SK-N-SH (cell line): ENCODE measurements at regions of chr1 and their contacts with region 1.

Region 1: GRCh38 chr1:156129706-156130581 is 15.4 kb downstream of the LMNA start:
- DNase-seq: peak; percentile 90
- H3K4me3 ChIP-seq: peak overlapping the region in 1 of 2 experiments; percentile 30; a peak in 1 of 4 replicates
- H3K27ac ChIP-seq: peak overlapping the region; percentile 94 to 100
- H3K4me1 ChIP-seq: peaks cover 46 to 49% of the 10 kb centered on the region in 2 experiments
- H3K27me3 ChIP-seq: no peaks in the 10 kb centered on the region
- CTCF ChIP-seq: peak; percentile 96
- EP300 ChIP-seq: peak in 1 of 2 experiments; percentile 19; a peak in 1 of 4 replicates
- RAD21 ChIP-seq: peak; percentile 96

Region 2: GRCh38 chr1:155931332-155932038 is 198.5 kb before region 1 on chr1:
- CTCF ChIA-PET with region 1: no interaction called
- POLR2A ChIA-PET with region 1: no interaction called
- DNase-seq: no peak
- H3K4me3 ChIP-seq: peak overlapping the region; percentile 17 to 86
- H3K27ac ChIP-seq: peak overlapping the region in 1 of 2 experiments; percentile 30; a peak in 1 of 4 replicates
- H3K4me1 ChIP-seq: peaks cover 19 to 20% of the 10 kb centered on the region in 2 experiments
- H3K27me3 ChIP-seq: no peaks in the 10 kb centered on the region
- CTCF ChIP-seq: no peak
- EP300 ChIP-seq: no peak
- RAD21 ChIP-seq: no peak

Region 3: GRCh38 chr1:155978325-155978972 is 151.5 kb before region 1 on chr1 and contains the start of gene ARHGEF2:
- CTCF ChIA-PET with region 1: no interaction called
- POLR2A ChIA-PET with region 1: no interaction called
- DNase-seq: peak; percentile 91
- H3K4me3 ChIP-seq: peak within 1 kb of the TSS; percentile 88 to 91
- H3K27ac ChIP-seq: peak within 1 kb of the TSS; percentile 87 to 93
- H3K4me1 ChIP-seq: peaks cover 42 to 57% of the 10 kb centered on the region in 2 experiments
- H3K27me3 ChIP-seq: no peaks in the 10 kb centered on the region
- CTCF ChIP-seq: peak; percentile 52
- EP300 ChIP-seq: no peak
- RAD21 ChIP-seq: 0 out of 2 replicates have a peak, but pooled peaks have one; percentile 7
- polyA plus RNA-seq, gene ARHGEF2: 32.4 and 50.8 TPM in 2 replicates

Region 4: GRCh38 chr1:156067262-156067661 is 62.7 kb before region 1 on chr1:
- CTCF ChIA-PET with region 1: interaction called, 10 read pairs
- POLR2A ChIA-PET with region 1: no interaction called
- DNase-seq: no peak
- H3K4me3 ChIP-seq: no peak overlapping the region
- H3K27ac ChIP-seq: no peak overlapping the region
- H3K4me1 ChIP-seq: peaks cover 0 to 17% of the 10 kb centered on the region in 2 experiments; a peak in 1 of 4 replicates
- H3K27me3 ChIP-seq: no peaks in the 10 kb centered on the region
- CTCF ChIP-seq: no peak
- EP300 ChIP-seq: no peak
- RAD21 ChIP-seq: no peak

Region 5: DNA sequence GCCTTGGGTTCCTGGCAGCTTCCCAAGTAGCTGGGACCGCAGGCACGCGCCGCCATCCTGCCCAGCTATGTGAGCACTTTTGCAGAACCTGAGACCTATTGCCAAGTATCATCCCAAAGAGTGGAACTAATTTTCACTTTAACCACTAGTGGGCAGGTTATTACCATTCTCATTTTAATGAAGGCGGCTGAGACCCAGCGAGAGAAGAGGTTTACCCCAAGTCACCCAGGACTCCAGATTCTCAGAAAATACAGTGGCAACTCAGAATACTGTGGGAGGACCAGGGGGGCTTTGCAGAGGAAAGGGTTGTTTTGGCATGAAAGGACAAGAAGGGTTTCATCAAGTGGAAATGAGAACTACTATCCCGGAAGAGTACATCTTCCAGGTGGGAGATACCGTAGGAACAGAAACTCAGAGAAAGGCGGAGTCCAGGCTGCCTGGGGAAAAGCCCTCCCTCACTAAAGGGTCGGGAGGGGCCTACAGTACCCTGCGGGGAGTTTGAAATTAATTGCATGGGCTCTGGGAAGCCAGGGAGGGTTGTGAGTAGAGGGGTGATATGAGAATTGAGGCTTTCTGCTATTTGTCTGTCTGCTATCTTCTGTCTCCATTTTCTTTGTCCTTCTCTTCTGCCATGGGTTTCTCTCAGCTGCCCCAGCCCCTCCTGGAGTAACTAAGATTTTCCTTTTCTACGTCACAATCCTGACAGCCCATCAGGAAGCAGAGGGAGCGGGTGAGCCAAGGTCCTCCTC is 16.2 kb after region 1 on chr1:
- CTCF ChIA-PET with region 1: interaction called, 64 read pairs
- POLR2A ChIA-PET with region 1: no interaction called
- DNase-seq: peak; percentile 85
- H3K4me3 ChIP-seq: 0 out of 4 replicates have a peak overlapping the region, but pooled peaks of 1 of the 2 experiments have one; percentile 1
- H3K27ac ChIP-seq: peak overlapping the region; percentile 30 to 51; a peak in 2 of 4 replicates
- H3K4me1 ChIP-seq: peaks cover 12 to 15% of the 10 kb centered on the region in 2 experiments
- H3K27me3 ChIP-seq: no peaks in the 10 kb centered on the region
- CTCF ChIP-seq: peak; percentile 75
- EP300 ChIP-seq: no peak; a peak in 1 of 4 replicates
- RAD21 ChIP-seq: peak; percentile 87

Region 6: DNA sequence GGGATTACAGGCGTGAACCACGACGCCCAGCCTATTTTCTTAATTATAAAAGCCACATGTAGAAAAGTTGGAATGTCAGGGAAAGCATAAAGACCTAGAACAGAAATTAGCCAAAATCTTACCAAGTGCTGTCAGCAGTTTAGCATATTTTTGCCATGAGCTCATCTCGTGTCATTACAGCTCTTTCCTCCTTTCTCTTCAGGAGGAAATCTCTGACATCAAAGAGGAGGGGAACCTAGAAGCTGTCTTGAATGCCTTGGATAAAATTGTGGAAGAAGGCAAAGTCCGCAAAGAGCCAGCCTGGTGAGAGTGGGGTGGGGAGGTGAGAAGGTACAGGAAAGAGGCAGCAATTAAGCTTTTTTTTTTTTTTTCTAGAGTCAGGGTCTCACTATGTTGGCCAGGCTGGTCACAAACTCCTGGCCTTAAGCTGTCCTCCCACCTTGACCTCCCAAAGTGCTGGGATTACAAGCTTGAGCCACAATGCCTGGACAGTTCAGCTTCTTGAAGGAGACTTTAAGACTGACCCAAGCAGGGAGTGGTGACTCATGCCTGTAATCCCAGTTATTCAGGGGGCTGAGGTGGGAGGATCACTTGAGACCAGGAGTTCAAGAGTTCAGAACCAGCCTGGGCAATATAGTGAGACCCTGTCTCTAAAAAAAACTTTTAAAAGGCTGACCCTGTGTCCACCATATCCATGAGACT is 103.6 kb after region 1 on chr1:
- CTCF ChIA-PET with region 1: interaction called, 121 read pairs
- POLR2A ChIA-PET with region 1: no interaction called
- DNase-seq: no peak
- H3K4me3 ChIP-seq: no peak overlapping the region
- H3K27ac ChIP-seq: peak overlapping the region in 1 of 2 experiments; percentile 82; a peak in 2 of 4 replicates
- H3K4me1 ChIP-seq: peaks cover 0 to 11% of the 10 kb centered on the region in 2 experiments; a peak in 3 of 4 replicates
- H3K27me3 ChIP-seq: no peaks in the 10 kb centered on the region
- CTCF ChIP-seq: no peak
- EP300 ChIP-seq: no peak
- RAD21 ChIP-seq: no peak

Region 7: DNA sequence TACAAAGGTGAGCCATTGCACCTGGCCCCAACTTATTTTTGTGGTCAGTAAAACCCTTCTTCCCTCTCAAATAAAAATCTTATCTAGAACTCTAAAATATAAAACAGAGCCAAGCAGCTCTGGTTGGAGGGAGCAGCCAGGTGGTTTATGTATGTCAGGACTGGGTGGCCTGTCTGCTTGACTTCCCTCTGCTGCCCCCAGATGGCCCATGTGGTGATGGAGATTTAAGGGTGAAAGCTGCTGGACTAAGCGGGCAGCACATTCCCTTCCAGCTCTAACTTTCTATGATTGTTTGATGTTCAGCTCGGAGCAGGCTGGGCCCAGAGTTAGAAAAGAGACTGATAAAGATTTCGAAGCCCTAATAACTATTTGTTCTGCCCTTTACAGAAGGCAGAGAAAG is 129.9 kb after region 1 on chr1:
- CTCF ChIA-PET with region 1: interaction called, 11 read pairs
- POLR2A ChIA-PET with region 1: interaction called, 4 read pairs
- DNase-seq: peak; percentile 64
- H3K4me3 ChIP-seq: no peak overlapping the region
- H3K27ac ChIP-seq: peak overlapping the region in 1 of 2 experiments; percentile 36; a peak in 2 of 4 replicates
- H3K4me1 ChIP-seq: peaks cover 11 to 27% of the 10 kb centered on the region in 2 experiments; a peak in 3 of 4 replicates
- H3K27me3 ChIP-seq: no peaks in the 10 kb centered on the region
- CTCF ChIP-seq: peak; percentile 32; the same call in 1 of the 2 replicates
- EP300 ChIP-seq: peak in 1 of 2 experiments; percentile 21; a peak in 1 of 4 replicates
- RAD21 ChIP-seq: peak; percentile 79